ENCODE measurements at regions of chr9 and their contacts with region 1.

Region 1: GRCh38 chr9:83800201-83801033 is 17.2 kb downstream of the GKAP1 start:
- DNase-seq: no peak
- H3K4me3 ChIP-seq: no peak overlapping the region
- H3K27ac ChIP-seq: no peak overlapping the region
- H3K4me1 ChIP-seq: no peaks in the 10 kb centered on the region
- H3K27me3 ChIP-seq: no peaks in the 10 kb centered on the region
- CTCF ChIP-seq: no peak

Region 2: GRCh38 chr9:83247732-83248131 is 552.7 kb before region 1 on chr9:
- CTCF ChIA-PET with region 1: no interaction called
- POLR2A ChIA-PET with region 1: interaction called, 17 read pairs
- intact Hi-C with region 1: no loop called
- DNase-seq: no peak
- H3K4me3 ChIP-seq: no peak overlapping the region
- H3K27ac ChIP-seq: no peak overlapping the region
- H3K4me1 ChIP-seq: no peaks in the 10 kb centered on the region
- H3K27me3 ChIP-seq: no peaks in the 10 kb centered on the region
- CTCF ChIP-seq: no peak

Region 3: GRCh38 chr9:83526901-83527300 is 273.5 kb before region 1 on chr9:
- CTCF ChIA-PET with region 1: no interaction called
- POLR2A ChIA-PET with region 1: no interaction called
- intact Hi-C with region 1: no loop called
- DNase-seq: no peak
- H3K4me3 ChIP-seq: no peak overlapping the region
- H3K27ac ChIP-seq: no peak overlapping the region
- H3K4me1 ChIP-seq: no peaks in the 10 kb centered on the region
- H3K27me3 ChIP-seq: peaks cover 13% of the 10 kb centered on the region
- CTCF ChIP-seq: no peak

Region 4: DNA sequence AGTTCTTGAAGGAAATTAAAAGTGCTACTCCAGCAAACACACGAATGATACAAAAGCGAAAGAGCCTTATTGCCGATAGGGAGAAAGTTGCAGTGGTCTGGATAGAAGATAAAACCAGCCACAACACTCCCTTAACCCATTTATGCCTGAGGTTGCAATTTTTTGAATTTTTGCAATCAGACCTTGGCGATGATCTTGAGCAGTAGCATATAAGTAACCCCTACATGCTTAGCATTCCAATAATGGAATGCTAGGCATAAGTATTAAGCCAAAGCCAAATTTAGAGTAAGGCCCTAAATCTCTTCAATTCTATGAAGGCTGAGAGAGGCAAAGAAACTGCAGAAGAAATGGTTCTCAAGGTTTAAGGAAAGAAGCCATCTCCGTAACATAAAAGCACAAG is 386.7 kb after region 1 on chr9:
- CTCF ChIA-PET with region 1: no interaction called
- POLR2A ChIA-PET with region 1: no interaction called
- intact Hi-C with region 1: no loop called
- DNase-seq: no peak
- H3K4me3 ChIP-seq: no peak overlapping the region
- H3K27ac ChIP-seq: no peak overlapping the region
- H3K4me1 ChIP-seq: peaks cover 6% of the 10 kb centered on the region
- H3K27me3 ChIP-seq: peaks cover 7% of the 10 kb centered on the region
- CTCF ChIP-seq: no peak

Measured in A673 (cell line).